ENCODE measurements at regions of chr15 and their contacts with region 1.

Region 1: DNA sequence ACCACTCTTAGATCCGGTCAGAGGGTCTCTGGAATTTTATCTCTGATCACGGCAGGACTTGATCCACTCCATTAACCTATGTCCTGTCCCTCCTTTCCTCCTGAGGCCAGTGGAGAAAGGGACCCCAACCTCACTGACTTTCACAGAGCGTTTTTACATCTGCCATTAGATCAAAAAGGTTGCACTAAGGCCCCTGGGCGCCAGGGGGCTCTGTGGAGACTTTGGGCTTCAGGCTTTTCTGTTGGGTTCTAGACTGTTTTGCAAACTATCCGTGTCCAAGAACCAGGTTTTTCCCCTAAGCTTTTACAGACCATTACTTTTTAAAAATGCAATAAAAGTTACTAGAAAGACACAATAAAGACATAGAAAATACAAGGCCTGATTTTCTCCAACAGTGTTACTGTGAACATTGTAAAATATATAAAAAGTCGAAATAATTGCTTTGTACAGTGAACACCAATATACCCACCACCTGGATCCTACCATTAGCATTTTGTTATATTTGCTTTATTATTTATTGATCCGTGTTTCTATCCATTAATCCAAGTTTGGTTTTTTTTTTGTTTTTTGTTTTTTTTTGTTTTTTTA is 159.7 kb downstream of the POLR2M start:
- DNase-seq: peak; percentile 23 to 55
- ATAC-seq: peak in 2 of 3 donors; percentile 47 to 53
- H3K4me3 ChIP-seq: no peak overlapping the region
- H3K4me3 Mint-ChIP-seq: no peak overlapping the region
- H3K27ac ChIP-seq: no peak overlapping the region
- H3K27ac Mint-ChIP-seq: no peak overlapping the region
- H3K4me1 ChIP-seq: peaks cover 16% of the 10 kb centered on the region
- H3K4me1 Mint-ChIP-seq: peaks cover 18 to 26% of the 10 kb centered on the region in 2 donors
- H3K27me3 ChIP-seq: peaks cover 10% of the 10 kb centered on the region
- H3K27me3 Mint-ChIP-seq: peaks cover 23 to 83% of the 10 kb centered on the region in 2 donors
- CTCF ChIP-seq: peak; percentile 70

Region 2: DNA sequence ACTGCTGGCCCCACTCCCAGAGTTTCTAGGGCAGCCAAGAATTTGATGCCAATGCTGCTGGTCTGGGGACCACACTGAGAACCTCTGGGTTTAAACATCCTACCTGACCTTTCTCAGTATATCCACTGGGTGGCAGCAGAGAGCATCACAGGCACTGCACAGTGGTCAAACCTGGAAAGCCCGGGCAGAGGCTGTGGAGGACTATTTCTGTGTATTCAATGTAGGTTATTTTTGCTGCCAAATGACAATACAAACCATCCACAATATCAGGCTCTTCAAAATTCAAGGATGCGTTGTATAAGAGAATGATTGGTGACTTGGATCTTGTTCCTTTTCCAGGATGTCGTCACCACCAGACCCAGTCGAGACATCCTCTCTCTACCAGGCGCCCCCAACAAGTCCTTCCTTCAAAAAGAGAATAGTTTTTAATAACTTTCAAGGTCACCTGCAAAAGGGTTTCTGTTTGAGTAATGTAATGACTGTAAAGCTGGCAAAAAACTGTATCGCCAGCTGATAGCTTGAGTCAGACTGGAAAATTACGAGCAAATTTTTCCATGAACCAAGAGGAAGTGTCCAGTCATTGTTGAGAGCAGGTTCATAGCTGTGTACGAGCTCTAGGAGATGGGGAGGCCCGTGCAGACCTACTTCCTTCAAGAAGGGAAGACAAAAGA is 305.1 kb before region 1 on chr15:
- intact Hi-C with region 1: loop called (anchors 10 kb)
- DNase-seq: peak; percentile 44 to 82
- ATAC-seq: peak; percentile 88 to 96 (median 96)
- H3K4me3 ChIP-seq: no peak overlapping the region
- H3K4me3 Mint-ChIP-seq: no peak overlapping the region
- H3K27ac ChIP-seq: no peak overlapping the region
- H3K27ac Mint-ChIP-seq: no peak overlapping the region
- H3K4me1 ChIP-seq: peaks cover 12% of the 10 kb centered on the region
- H3K4me1 Mint-ChIP-seq: peaks cover 11 to 12% of the 10 kb centered on the region in 2 donors
- H3K27me3 ChIP-seq: no peaks in the 10 kb centered on the region
- H3K27me3 Mint-ChIP-seq: peaks cover 20 to 47% of the 10 kb centered on the region in 2 donors
- CTCF ChIP-seq: peak; percentile 94

Region 3: DNA sequence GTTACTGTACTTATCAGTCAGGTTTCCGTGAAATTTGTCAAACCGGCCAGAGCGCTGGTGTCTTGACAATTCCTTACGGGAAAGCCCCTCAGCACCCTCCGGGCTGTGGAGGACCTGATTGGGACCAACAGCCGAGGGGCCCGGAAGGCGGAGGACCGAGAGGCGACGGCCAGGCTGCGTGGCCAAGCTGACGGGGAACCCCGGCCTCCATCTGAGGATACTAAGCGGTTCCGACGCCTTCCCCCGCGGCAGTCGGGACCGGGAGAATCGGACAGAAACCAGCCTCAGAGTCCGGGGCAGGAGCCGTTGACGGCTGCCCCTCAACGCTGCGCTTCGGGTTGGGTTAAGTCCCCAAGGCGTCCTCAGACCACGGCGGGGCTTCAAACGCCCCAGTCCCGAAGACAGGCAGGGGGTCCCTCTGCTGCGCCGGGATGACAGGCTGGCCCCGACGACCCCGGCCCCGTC is 198.8 kb after region 1 on chr15:
- intact Hi-C with region 1: loop called (anchors 5 kb)
- DNase-seq: peak in 1 of 2 donors; percentile 10
- ATAC-seq: no peak
- H3K4me3 ChIP-seq: no peak overlapping the region
- H3K4me3 Mint-ChIP-seq: peak overlapping the region; percentile 75
- H3K27ac ChIP-seq: no peak overlapping the region
- H3K27ac Mint-ChIP-seq: no peak overlapping the region
- H3K4me1 ChIP-seq: peaks cover 15% of the 10 kb centered on the region
- H3K4me1 Mint-ChIP-seq: peaks cover 4 to 6% of the 10 kb centered on the region in 2 donors
- H3K27me3 ChIP-seq: peaks cover 55% of the 10 kb centered on the region
- H3K27me3 Mint-ChIP-seq: peaks cover 50 to 65% of the 10 kb centered on the region in 2 donors
- CTCF ChIP-seq: no peak

Measured in natural killer cell (primary cell).